ENCODE measurements at regions of chr1 and their contacts with region 1.

Region 1: GRCh38 chr1:221576268-221576667 is 165.6 kb downstream of the DUSP10 start:
- DNase-seq: no peak
- H3K4me3 ChIP-seq: no peak overlapping the region
- H3K27ac ChIP-seq: no peak overlapping the region
- H3K4me1 ChIP-seq: no peaks in the 10 kb centered on the region
- H3K27me3 ChIP-seq: no peaks in the 10 kb centered on the region
- CTCF ChIP-seq: no peak
- POLR2A ChIP-seq: no peak

Region 2: GRCh38 chr1:220825819-220826551 is 750.3 kb before region 1 on chr1:
- intact Hi-C with region 1: no loop called
- DNase-seq: no peak
- H3K4me3 ChIP-seq: no peak overlapping the region
- H3K27ac ChIP-seq: no peak overlapping the region
- H3K4me1 ChIP-seq: no peaks in the 10 kb centered on the region
- H3K27me3 ChIP-seq: no peaks in the 10 kb centered on the region
- CTCF ChIP-seq: no peak
- POLR2A ChIP-seq: no peak

Region 3: GRCh38 chr1:221045842-221046831 is 530.1 kb before region 1 on chr1:
- intact Hi-C with region 1: loop called (anchors 5 kb)
- DNase-seq: no peak
- H3K4me3 ChIP-seq: no peak overlapping the region
- H3K27ac ChIP-seq: no peak overlapping the region
- H3K4me1 ChIP-seq: no peaks in the 10 kb centered on the region
- H3K27me3 ChIP-seq: no peaks in the 10 kb centered on the region
- CTCF ChIP-seq: no peak
- POLR2A ChIP-seq: no peak

Region 4: GRCh38 chr1:221344693-221345092 is 231.6 kb before region 1 on chr1:
- intact Hi-C with region 1: no loop called
- DNase-seq: no peak
- H3K4me3 ChIP-seq: no peak overlapping the region
- H3K27ac ChIP-seq: no peak overlapping the region
- H3K4me1 ChIP-seq: no peaks in the 10 kb centered on the region
- H3K27me3 ChIP-seq: no peaks in the 10 kb centered on the region
- CTCF ChIP-seq: no peak
- POLR2A ChIP-seq: no peak

Region 5: GRCh38 chr1:221527886-221528624 is 48.2 kb before region 1 on chr1:
- intact Hi-C with region 1: no loop called
- DNase-seq: no peak
- H3K4me3 ChIP-seq: no peak overlapping the region
- H3K27ac ChIP-seq: no peak overlapping the region
- H3K4me1 ChIP-seq: no peaks in the 10 kb centered on the region
- H3K27me3 ChIP-seq: no peaks in the 10 kb centered on the region
- CTCF ChIP-seq: no peak
- POLR2A ChIP-seq: no peak